CD4-positive, alpha-beta memory T cell (primary cell): ENCODE measurements at regions of chr20 and their contacts with region 1.

Region 1: GRCh38 chr20:32652739-32653526 is 20.8 kb downstream of the C20orf203 start:
- DNase-seq: peak; percentile 80 to 87 (median 84)
- H3K4me3 ChIP-seq: no peak overlapping the region
- H3K4me3 Mint-ChIP-seq: peak overlapping the region in 6 of 8 donors; percentile 30 to 62 (median 50)
- H3K27ac ChIP-seq: no peak overlapping the region
- H3K27ac Mint-ChIP-seq: peak overlapping the region in 2 of 7 donors; percentile 10 to 36
- H3K4me1 ChIP-seq: peaks cover 10% of the 10 kb centered on the region
- H3K4me1 Mint-ChIP-seq: peaks cover 5 to 10% (median 6%) of the 10 kb centered on the region in 4 donors
- H3K27me3 ChIP-seq: no peaks in the 10 kb centered on the region
- H3K27me3 Mint-ChIP-seq: no peaks in the 10 kb centered on the region

Region 2: GRCh38 chr20:31822421-31823330 is 830.3 kb before region 1 on chr20:
- CTCF ChIA-PET with region 1: interaction called, 12 read pairs
- POLR2A ChIA-PET with region 1: no interaction called
- intact Hi-C with region 1: loop called (anchors 10 kb)
- DNase-seq: peak; percentile 59 to 74 (median 63)
- H3K4me3 ChIP-seq: no peak overlapping the region
- H3K4me3 Mint-ChIP-seq: peak overlapping the region in 4 of 8 donors; percentile 20 to 52 (median 44)
- H3K27ac ChIP-seq: no peak overlapping the region
- H3K27ac Mint-ChIP-seq: peak overlapping the region in 1 of 7 donors; percentile 43
- H3K4me1 ChIP-seq: no peaks in the 10 kb centered on the region
- H3K4me1 Mint-ChIP-seq: peaks cover 0 to 7% (median 6%) of the 10 kb centered on the region in 4 donors
- H3K27me3 ChIP-seq: no peaks in the 10 kb centered on the region
- H3K27me3 Mint-ChIP-seq: peaks cover 0 to 2% of the 10 kb centered on the region in 2 donors

Region 3: DNA sequence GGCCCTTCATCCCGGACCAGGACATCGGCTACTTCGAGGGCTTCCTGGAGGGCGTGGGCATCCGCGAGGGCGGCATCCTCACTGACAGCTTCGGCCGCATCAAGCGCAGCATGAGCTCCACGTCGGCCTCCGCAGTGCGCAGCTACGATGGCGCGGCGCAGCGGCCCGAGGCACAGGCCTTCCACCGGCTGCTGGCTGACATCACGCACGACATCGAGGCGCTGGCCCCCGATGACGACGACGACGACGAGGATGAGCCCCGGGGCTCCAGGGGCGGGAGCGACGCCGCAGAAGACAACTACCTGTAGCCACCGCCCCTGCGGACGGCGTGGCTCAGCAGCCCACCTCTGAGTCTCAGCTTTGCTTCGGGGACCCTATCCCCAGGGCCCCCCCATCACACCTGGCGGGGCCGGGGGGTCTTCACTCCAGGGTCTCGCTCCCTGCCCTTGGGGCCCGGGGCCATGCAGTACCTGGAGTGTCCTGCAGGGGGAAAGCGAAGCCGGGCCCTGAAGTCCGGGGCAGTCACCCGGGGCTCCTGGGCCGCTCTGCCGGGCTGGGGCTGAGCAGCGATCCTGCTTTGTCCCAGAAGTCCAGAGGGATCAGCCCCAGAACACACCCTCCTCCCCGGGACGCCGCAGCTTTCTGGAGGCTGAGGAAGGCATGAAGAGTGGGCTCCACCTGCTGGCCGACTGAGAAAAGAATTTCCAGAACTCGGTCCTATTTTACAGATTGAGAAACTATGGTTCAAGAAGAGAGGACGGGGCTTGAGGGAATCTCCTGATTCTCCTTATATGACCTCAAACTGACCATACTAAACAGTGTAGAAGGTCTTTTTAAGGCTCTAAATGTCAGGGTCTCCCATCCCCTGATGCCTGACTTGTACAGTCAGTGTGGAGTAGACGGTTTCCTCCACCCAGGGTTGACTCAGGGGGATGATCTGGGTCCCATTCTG is 621.6 kb before region 1 on chr20:
- CTCF ChIA-PET with region 1: no interaction called
- POLR2A ChIA-PET with region 1: no interaction called
- intact Hi-C with region 1: loop called (anchors 1 kb)
- DNase-seq: peak; percentile 48 to 66 (median 55)
- H3K4me3 ChIP-seq: no peak overlapping the region
- H3K4me3 Mint-ChIP-seq: peak overlapping the region in 6 of 8 donors; percentile 17 to 57 (median 42)
- H3K27ac ChIP-seq: no peak overlapping the region
- H3K27ac Mint-ChIP-seq: no peak overlapping the region
- H3K4me1 ChIP-seq: no peaks in the 10 kb centered on the region
- H3K4me1 Mint-ChIP-seq: no peaks in the 10 kb centered on the region
- H3K27me3 ChIP-seq: peaks cover 3% of the 10 kb centered on the region
- H3K27me3 Mint-ChIP-seq: peaks cover 10 to 17% of the 10 kb centered on the region in 2 donors

Region 4: DNA sequence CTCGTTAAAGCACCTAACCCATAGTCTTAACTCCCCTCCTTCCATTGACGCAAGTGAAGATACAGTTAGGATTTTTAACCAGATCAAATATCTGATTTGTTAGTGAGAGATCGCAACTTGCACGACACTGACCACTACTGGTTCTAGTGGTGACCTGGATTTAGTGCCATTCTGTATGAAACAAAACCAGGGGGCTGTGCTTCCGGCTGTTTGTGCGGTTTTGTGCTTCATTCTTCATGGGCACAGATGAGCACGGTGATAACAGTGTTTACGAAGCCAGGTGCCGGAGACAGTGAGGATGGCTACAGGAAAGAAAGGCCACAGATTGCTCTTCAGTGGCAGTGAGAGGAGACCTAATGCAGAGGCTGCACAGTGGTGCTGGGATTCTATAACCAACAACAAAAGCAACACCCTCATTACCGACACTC is 143.3 kb before region 1 on chr20:
- CTCF ChIA-PET with region 1: interaction called, 26 read pairs
- POLR2A ChIA-PET with region 1: interaction called, 3 read pairs
- intact Hi-C with region 1: no loop called
- DNase-seq: peak; percentile 76 to 89 (median 82)
- H3K4me3 ChIP-seq: peak overlapping the region in 1 of 2 donors; percentile 43
- H3K4me3 Mint-ChIP-seq: peak overlapping the region; percentile 77 to 86 (median 82)
- H3K27ac ChIP-seq: peak overlapping the region; percentile 60
- H3K27ac Mint-ChIP-seq: peak overlapping the region; percentile 92 to 97 (median 94)
- H3K4me1 ChIP-seq: peaks cover 71% of the 10 kb centered on the region
- H3K4me1 Mint-ChIP-seq: peaks cover 56 to 90% (median 68%) of the 10 kb centered on the region in 4 donors
- H3K27me3 ChIP-seq: no peaks in the 10 kb centered on the region
- H3K27me3 Mint-ChIP-seq: no peaks in the 10 kb centered on the region

Region 5: GRCh38 chr20:32521780-32522525 is 131.0 kb before region 1 on chr20:
- CTCF ChIA-PET with region 1: interaction called, 312 read pairs
- POLR2A ChIA-PET with region 1: interaction called, 43 read pairs
- intact Hi-C with region 1: loop called (anchors 1 kb)
- DNase-seq: peak; percentile 62 to 72 (median 70)
- H3K4me3 ChIP-seq: no peak overlapping the region
- H3K4me3 Mint-ChIP-seq: peak overlapping the region in 6 of 8 donors; percentile 21 to 76 (median 56)
- H3K27ac ChIP-seq: peak overlapping the region; percentile 38
- H3K27ac Mint-ChIP-seq: peak overlapping the region; percentile 68 to 90 (median 88)
- H3K4me1 ChIP-seq: peaks cover 59% of the 10 kb centered on the region
- H3K4me1 Mint-ChIP-seq: peaks cover 37 to 66% (median 56%) of the 10 kb centered on the region in 4 donors
- H3K27me3 ChIP-seq: no peaks in the 10 kb centered on the region
- H3K27me3 Mint-ChIP-seq: no peaks in the 10 kb centered on the region

Region 6: GRCh38 chr20:32585011-32585518 is 67.9 kb before region 1 on chr20 and contains the start of gene NOL4L:
- CTCF ChIA-PET with region 1: interaction called, 6 read pairs
- POLR2A ChIA-PET with region 1: interaction called, 3 read pairs
- intact Hi-C with region 1: loop called (anchors 2 kb)
- DNase-seq: peak; percentile 27 to 57 (median 37)
- H3K4me3 ChIP-seq: peak within 1 kb of the TSS; percentile 29 to 61
- H3K4me3 Mint-ChIP-seq: peak within 1 kb of the TSS; percentile 88 to 97 (median 91)
- H3K27ac ChIP-seq: peak within 1 kb of the TSS; percentile 49
- H3K27ac Mint-ChIP-seq: peak within 1 kb of the TSS; percentile 86 to 99 (median 92)
- H3K4me1 ChIP-seq: peaks cover 44% of the 10 kb centered on the region
- H3K4me1 Mint-ChIP-seq: peaks cover 14 to 26% (median 23%) of the 10 kb centered on the region in 4 donors
- H3K27me3 ChIP-seq: no peaks in the 10 kb centered on the region
- H3K27me3 Mint-ChIP-seq: no peaks in the 10 kb centered on the region
- total RNA-seq, gene NOL4L: 71.0 to 74.2 TPM